ENCODE measurements at regions of chr4 and their contacts with region 1.

Region 1: DNA sequence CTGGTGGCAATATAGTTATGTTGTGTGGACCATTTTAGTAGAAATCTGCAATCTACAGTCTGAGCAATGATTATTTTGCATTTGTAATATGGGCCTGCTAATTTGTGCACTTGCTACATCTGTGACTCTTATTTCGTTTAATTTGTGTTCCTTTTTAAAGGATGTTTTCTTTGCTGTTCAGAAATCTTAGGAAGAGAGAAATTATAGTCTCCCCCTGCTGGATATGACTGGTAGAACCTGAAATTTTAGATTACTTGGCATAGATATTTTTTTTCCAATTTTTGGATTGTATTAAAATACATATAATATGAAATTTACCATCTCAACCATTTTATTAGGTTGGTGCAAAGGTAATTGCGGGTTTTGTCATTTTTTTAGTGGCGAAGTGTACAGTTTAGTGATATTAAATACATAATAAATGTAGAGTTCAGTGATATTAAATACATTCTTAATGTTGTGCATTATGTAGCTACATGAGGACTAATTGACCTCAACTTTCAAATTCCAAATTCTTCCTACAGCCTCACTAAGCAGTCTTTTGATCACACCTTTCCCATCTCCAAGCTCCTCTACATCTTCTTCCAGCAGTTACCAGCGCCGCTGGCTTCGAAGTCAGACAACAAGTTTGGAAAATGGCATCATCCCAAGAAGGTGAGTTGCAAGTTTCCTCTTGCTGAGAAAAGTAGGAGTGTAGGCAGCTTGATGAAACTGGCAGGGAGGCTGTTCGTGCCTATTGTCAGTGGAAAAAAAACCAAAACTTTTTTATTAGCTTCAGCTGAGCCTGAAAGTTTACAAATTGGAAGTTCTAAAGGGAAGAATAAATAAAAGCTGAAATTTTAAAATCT is 82.2 kb downstream of the FNIP2 start:
- DNase-seq: no peak
- ATAC-seq: no peak
- H3K4me3 Mint-ChIP-seq: no peak overlapping the region
- H3K27ac Mint-ChIP-seq: no peak overlapping the region
- H3K4me1 Mint-ChIP-seq: no peaks in the 10 kb centered on the region
- H3K27me3 Mint-ChIP-seq: peaks cover 32% of the 10 kb centered on the region
- CTCF ChIP-seq: no peak

Region 2: GRCh38 chr4:158253350-158253980 is 597.6 kb before region 1 on chr4:
- CTCF ChIA-PET with region 1: interaction called, 6 read pairs
- POLR2A ChIA-PET with region 1: no interaction called
- intact Hi-C with region 1: loop called (anchors 1 kb)
- DNase-seq: no peak
- ATAC-seq: peak; percentile 42
- H3K4me3 Mint-ChIP-seq: no peak overlapping the region
- H3K27ac Mint-ChIP-seq: no peak overlapping the region
- H3K4me1 Mint-ChIP-seq: peaks cover 5% of the 10 kb centered on the region
- H3K27me3 Mint-ChIP-seq: peaks cover 12% of the 10 kb centered on the region
- CTCF ChIP-seq: no peak

Region 3: GRCh38 chr4:158671915-158672806 is 178.9 kb before region 1 on chr4 and contains the start of gene ETFDH:
- CTCF ChIA-PET with region 1: no interaction called
- POLR2A ChIA-PET with region 1: no interaction called
- intact Hi-C with region 1: loop called (anchors 5 kb)
- DNase-seq: peak; percentile 95
- ATAC-seq: peak; percentile 83
- H3K4me3 Mint-ChIP-seq: peak within 1 kb of the TSS; percentile 98
- H3K27ac Mint-ChIP-seq: peak within 1 kb of the TSS; percentile 96
- H3K4me1 Mint-ChIP-seq: peaks cover 23% of the 10 kb centered on the region
- H3K27me3 Mint-ChIP-seq: no peaks in the 10 kb centered on the region
- CTCF ChIP-seq: no peak
- total RNA-seq, gene ETFDH: 12.0 and 15.4 TPM in 2 replicates

Region 4: DNA sequence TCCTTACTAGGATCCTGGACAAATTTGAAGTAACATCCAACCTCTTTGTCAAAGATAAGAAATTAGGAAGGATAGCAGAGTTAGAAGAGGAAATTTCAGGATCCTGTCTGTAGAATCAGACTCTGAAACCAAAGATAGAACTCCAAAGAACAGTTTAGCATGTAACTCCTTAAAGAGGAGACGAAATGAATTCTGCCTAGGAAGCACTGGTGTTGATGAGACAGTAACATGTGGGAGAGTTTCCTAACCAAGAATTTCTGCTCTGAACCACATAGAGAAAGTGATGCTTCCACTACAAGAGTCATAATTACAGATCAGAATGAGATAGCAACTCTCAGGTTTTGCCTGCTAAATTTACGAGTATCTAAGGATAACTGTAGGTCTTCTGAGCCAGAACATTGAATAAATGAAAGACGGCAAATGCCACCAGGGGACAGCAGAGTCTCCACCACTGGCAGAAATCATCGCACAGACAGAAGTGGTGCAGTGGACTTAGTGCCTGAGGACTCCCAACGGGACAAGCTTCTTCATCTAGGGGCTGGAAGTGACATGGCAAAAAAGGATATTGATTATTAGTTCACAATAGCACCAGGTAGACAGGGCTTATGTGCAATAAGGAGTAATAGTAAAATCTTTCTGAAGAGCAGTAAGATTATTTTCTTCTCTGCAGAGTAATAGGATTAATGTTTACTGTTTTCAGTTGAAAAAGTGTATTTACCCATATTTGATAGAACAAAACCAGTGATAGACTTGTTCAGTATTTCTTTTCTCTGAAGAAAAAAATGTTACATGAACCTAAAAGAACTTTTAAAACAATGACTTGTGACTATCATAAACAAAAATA is 121.1 kb before region 1 on chr4:
- CTCF ChIA-PET with region 1: no interaction called
- POLR2A ChIA-PET with region 1: no interaction called
- intact Hi-C with region 1: loop called (anchors 1 kb)
- DNase-seq: no peak
- ATAC-seq: peak; percentile 40
- H3K4me3 Mint-ChIP-seq: no peak overlapping the region
- H3K27ac Mint-ChIP-seq: no peak overlapping the region
- H3K4me1 Mint-ChIP-seq: no peaks in the 10 kb centered on the region
- H3K27me3 Mint-ChIP-seq: peaks cover 37% of the 10 kb centered on the region
- CTCF ChIP-seq: no peak

Region 5: GRCh38 chr4:158778156-158778711 is 72.8 kb before region 1 on chr4:
- CTCF ChIA-PET with region 1: no interaction called
- POLR2A ChIA-PET with region 1: no interaction called
- intact Hi-C with region 1: loop called (anchors 5 kb)
- DNase-seq: no peak
- ATAC-seq: peak; percentile 85
- H3K4me3 Mint-ChIP-seq: no peak overlapping the region
- H3K27ac Mint-ChIP-seq: no peak overlapping the region
- H3K4me1 Mint-ChIP-seq: peaks cover 7% of the 10 kb centered on the region
- H3K27me3 Mint-ChIP-seq: peaks cover 47% of the 10 kb centered on the region
- CTCF ChIP-seq: no peak

Region 6: DNA sequence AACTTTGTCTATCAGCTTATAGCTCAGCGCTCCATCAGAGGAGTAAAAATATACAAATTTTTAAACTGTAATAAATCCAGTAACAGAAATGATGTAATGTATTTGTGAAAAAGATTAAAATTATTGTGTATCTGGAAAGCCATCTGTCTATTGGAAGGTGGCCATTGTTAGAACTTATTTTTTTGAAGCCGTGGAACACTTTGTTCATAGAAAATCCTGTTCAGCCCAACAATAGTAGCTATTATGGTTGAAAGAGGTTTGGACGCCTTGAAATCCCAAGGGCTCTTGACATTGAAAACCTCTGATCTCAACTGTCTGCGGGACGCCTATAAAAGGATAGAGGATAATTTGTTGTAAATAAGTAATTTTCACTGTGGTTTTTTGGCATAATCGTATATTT is 350.1 kb after region 1 on chr4:
- CTCF ChIA-PET with region 1: interaction called, 67 read pairs
- POLR2A ChIA-PET with region 1: no interaction called
- intact Hi-C with region 1: no loop called
- DNase-seq: no peak
- ATAC-seq: no peak
- H3K4me3 Mint-ChIP-seq: no peak overlapping the region
- H3K27ac Mint-ChIP-seq: no peak overlapping the region
- H3K4me1 Mint-ChIP-seq: peaks cover 18% of the 10 kb centered on the region
- H3K27me3 Mint-ChIP-seq: no peaks in the 10 kb centered on the region
- CTCF ChIP-seq: no peak

Region 7: GRCh38 chr4:159290321-159291030 is 439.5 kb after region 1 on chr4:
- CTCF ChIA-PET with region 1: no interaction called
- POLR2A ChIA-PET with region 1: no interaction called
- intact Hi-C with region 1: no loop called
- DNase-seq: no peak
- ATAC-seq: no peak
- H3K4me3 Mint-ChIP-seq: no peak overlapping the region
- H3K27ac Mint-ChIP-seq: no peak overlapping the region
- H3K4me1 Mint-ChIP-seq: no peaks in the 10 kb centered on the region
- H3K27me3 Mint-ChIP-seq: no peaks in the 10 kb centered on the region
- CTCF ChIP-seq: no peak